Colonic mucosa (tissue), 4 donors: ENCODE measurements at regions of chr5 and their contacts with region 1.

Region 1: DNA sequence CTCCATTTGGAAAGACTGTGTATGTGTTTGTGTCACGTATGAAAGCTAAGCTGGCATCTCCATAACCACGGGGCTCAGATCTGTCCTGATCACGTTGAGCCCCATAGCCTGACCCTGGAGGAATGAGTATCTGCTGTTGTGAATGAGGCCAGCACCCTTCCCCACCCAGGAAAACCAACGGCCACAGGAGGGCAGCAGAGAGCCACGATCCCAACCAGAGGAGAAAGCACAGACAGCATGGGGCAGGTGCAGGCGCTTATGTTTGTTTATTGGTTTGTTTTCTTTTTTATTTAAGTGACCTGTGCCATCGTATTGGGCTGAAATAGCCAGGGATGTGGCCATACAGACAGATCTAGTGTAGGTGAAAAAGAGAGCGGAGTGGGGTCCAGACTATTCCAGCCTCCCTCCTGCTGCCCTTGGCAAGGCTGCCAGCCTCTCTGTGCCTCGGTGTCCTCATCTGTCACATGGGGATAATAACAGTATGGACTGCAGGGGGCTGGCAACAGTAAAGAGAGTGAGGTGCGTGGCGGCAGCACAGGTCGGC is 12.0 kb downstream of the OR2V2 start:
- DNase-seq: peak; percentile 94
- H3K4me3 ChIP-seq: no peak overlapping the region
- H3K27ac ChIP-seq: no peak overlapping the region
- H3K4me1 ChIP-seq: no peaks in the 10 kb centered on the region
- H3K27me3 ChIP-seq: no peaks in the 10 kb centered on the region
- CTCF ChIP-seq: peak; percentile 89

Region 2: DNA sequence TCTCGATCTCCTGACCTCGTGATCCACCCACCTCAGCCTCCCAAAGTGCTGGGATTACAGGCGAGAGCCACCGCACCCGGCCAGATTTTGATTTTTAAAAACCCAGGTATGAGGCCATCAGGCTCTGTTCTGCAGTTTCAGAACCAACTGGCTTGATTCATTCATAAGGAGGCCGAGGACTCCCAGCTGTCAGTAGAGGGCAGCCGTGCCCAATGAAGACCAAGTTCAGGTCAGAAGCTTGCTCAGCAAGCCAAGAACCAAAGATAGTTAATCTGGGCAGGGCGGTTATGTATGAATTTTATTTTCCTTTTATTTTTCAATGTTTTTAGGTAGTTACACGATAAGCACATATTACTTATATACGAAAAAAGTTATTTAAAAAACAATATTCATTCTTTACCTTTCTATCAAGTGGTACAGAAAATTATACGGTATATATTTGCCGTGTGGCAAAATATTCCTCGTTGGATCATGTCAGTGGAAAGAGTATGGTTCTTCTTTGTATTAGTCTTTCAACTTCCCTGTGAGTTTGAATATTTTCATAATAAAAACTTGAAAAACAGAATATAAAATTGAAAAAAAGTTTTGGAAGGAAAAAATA is 374.8 kb before region 1 on chr5:
- intact Hi-C with region 1: loop called (anchors 10 kb)
- DNase-seq: peak; percentile 86
- H3K4me3 ChIP-seq: no peak overlapping the region
- H3K27ac ChIP-seq: peak overlapping the region; percentile 48
- H3K4me1 ChIP-seq: no peaks in the 10 kb centered on the region
- H3K27me3 ChIP-seq: no peaks in the 10 kb centered on the region
- CTCF ChIP-seq: peak; percentile 61

Region 3: DNA sequence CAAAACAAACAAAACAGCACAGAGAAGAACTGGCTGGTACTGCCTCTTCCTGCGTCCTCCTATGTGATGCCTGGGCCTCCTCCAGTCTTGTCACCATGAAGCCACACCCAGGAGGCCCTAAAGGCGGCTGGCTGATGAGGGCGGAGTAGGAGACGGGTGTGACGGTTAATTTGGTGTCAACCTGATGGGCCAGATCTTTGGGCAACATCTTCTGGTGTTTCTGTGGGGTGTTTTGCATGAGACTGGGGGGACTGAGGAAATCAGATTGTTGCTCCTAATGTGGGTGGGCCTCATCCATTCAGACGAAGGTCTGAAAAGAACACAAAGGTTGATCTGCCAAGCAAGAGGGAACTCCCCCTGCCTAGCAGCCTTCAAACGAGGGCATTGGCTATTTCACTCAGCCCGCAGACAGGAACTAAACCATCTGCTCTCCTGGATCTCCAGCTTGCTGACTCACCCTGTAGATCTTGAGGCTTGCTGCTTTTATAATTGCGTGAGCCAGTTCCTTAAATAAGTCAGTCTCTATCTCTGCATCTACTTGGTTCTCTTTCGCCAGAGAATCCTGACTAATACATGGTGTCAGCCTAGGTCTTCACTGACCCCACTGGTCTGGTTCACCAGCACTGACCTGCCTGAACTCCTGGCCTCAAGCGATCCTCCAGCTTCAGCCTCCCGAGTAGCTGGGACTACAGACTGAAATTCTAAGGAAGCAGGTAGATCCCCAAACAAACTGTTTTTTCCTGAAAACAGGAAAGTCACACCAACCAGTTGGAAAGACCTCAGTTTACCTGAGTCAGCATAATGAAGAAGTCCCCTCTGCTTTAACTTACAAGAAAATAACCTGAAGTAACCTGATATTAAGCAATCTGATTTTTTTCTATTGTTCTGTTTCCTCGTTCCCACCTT is 285.5 kb before region 1 on chr5:
- intact Hi-C with region 1: loop called (anchors 10 kb)
- DNase-seq: peak; percentile 74
- H3K4me3 ChIP-seq: no peak overlapping the region
- H3K27ac ChIP-seq: no peak overlapping the region
- H3K4me1 ChIP-seq: no peaks in the 10 kb centered on the region
- H3K27me3 ChIP-seq: no peaks in the 10 kb centered on the region
- CTCF ChIP-seq: no peak